Heart left ventricle (tissue), 16 donors: ENCODE measurements at regions of chr2 and their contacts with region 1.

Region 1: GRCh38 chr2:187442378-187442777 is 5.7 kb downstream of the CALCRL start:
- DNase-seq: no peak
- ATAC-seq: no peak
- H3K4me3 ChIP-seq: peak overlapping the region in 6 of 12 donors; percentile 52 to 66 (median 59)
- H3K27ac ChIP-seq: no peak overlapping the region
- H3K4me1 ChIP-seq: peaks cover 0 to 46% (median 6%) of the 10 kb centered on the region in 12 donors
- H3K27me3 ChIP-seq: no peaks in the 10 kb centered on the region
- CTCF ChIP-seq: peak in 5 of 12 donors; percentile 9 to 42 (median 39)
- POLR2A ChIP-seq: no peak

Region 2: DNA sequence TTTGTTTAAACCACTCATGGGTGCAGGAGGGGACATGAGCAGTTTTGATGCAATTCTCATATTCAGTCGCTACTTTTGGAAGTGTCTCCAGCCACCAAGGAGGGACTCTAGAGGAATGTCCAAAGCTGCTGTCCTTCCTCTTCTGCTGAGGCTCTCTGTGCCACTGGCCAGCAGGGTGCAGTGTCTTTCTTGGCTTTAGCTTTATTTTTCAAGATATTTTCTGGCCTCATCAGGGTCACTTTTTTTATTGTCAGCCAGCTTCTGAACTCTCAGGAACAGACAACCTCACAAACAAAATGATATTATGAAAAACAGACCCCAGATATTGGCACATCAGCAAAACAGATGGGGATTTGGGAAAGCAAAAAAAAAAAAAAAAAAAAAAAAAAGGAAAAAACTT is 304.1 kb before region 1 on chr2:
- intact Hi-C with region 1: loop called in 1 of 10 experiments (anchors 10 kb)
- DNase-seq: peak in 4 of 5 donors; percentile 31 to 39 (median 35)
- ATAC-seq: peak in 3 of 4 donors; percentile 47 to 60 (median 55)
- H3K4me3 ChIP-seq: no peak overlapping the region
- H3K27ac ChIP-seq: peak overlapping the region in 1 of 12 donors; percentile 27
- H3K4me1 ChIP-seq: peaks cover 0 to 14% (median 0%) of the 10 kb centered on the region in 12 donors
- H3K27me3 ChIP-seq: no peaks in the 10 kb centered on the region
- CTCF ChIP-seq: peak in 11 of 12 donors; percentile 13 to 63 (median 48)
- POLR2A ChIP-seq: no peak

Region 3: GRCh38 chr2:187299122-187299906 is 143.1 kb before region 1 on chr2:
- intact Hi-C with region 1: loop called in 3 of 10 experiments (anchors 5 to 10 kb)
- DNase-seq: peak in 1 of 5 donors; percentile 40
- ATAC-seq: no peak
- H3K4me3 ChIP-seq: no peak overlapping the region
- H3K27ac ChIP-seq: peak overlapping the region in 3 of 12 donors; percentile 5 to 36 (median 24)
- H3K4me1 ChIP-seq: peaks cover 0 to 24% (median 5%) of the 10 kb centered on the region in 12 donors
- H3K27me3 ChIP-seq: no peaks in the 10 kb centered on the region
- CTCF ChIP-seq: peak; percentile 11 to 60 (median 38)
- POLR2A ChIP-seq: no peak

Region 4: GRCh38 chr2:187383043-187383800 is 59.2 kb before region 1 on chr2:
- intact Hi-C with region 1: loop called in 1 of 10 experiments (anchors 10 kb)
- DNase-seq: no peak
- ATAC-seq: peak in 3 of 4 donors; percentile 26 to 44 (median 33)
- H3K4me3 ChIP-seq: no peak overlapping the region
- H3K27ac ChIP-seq: peak overlapping the region in 3 of 12 donors; percentile 6 to 26 (median 18)
- H3K4me1 ChIP-seq: peaks cover 0 to 26% (median 2%) of the 10 kb centered on the region in 12 donors
- H3K27me3 ChIP-seq: no peaks in the 10 kb centered on the region
- CTCF ChIP-seq: no peak
- POLR2A ChIP-seq: no peak

Region 5: GRCh38 chr2:187403568-187404260 is 38.7 kb before region 1 on chr2:
- intact Hi-C with region 1: loop called in 4 of 10 experiments (anchors 1 to 5 kb)
- DNase-seq: peak in 1 of 5 donors; percentile 19
- ATAC-seq: peak; percentile 79 to 92 (median 86)
- H3K4me3 ChIP-seq: peak overlapping the region in 7 of 12 donors; percentile 15 to 35 (median 27)
- H3K27ac ChIP-seq: peak overlapping the region; percentile 7 to 71 (median 54)
- H3K4me1 ChIP-seq: peaks cover 0 to 48% (median 13%) of the 10 kb centered on the region in 12 donors
- H3K27me3 ChIP-seq: no peaks in the 10 kb centered on the region
- CTCF ChIP-seq: no peak
- POLR2A ChIP-seq: no peak